CD4-positive, alpha-beta memory T cell (primary cell): ENCODE measurements at regions of chr2 and their contacts with region 1.

Region 1: GRCh38 chr2:102366406-102367112 is 11.0 kb downstream of the IL18R1 start:
- DNase-seq: peak; percentile 30 to 55 (median 47)
- H3K4me3 ChIP-seq: peak overlapping the region; percentile 33 to 41
- H3K4me3 Mint-ChIP-seq: peak overlapping the region; percentile 18 to 86 (median 80)
- H3K27ac ChIP-seq: peak overlapping the region; percentile 59
- H3K27ac Mint-ChIP-seq: peak overlapping the region; percentile 81 to 98 (median 93)
- H3K4me1 ChIP-seq: peaks cover 51% of the 10 kb centered on the region
- H3K4me1 Mint-ChIP-seq: peaks cover 37 to 82% (median 64%) of the 10 kb centered on the region in 4 donors
- H3K27me3 ChIP-seq: no peaks in the 10 kb centered on the region
- H3K27me3 Mint-ChIP-seq: no peaks in the 10 kb centered on the region

Region 2: GRCh38 chr2:102317715-102318114 is 48.8 kb before region 1 on chr2:
- CTCF ChIA-PET with region 1: no interaction called
- POLR2A ChIA-PET with region 1: no interaction called
- intact Hi-C with region 1: no loop called
- DNase-seq: no peak
- H3K4me3 ChIP-seq: no peak overlapping the region
- H3K4me3 Mint-ChIP-seq: no peak overlapping the region
- H3K27ac ChIP-seq: no peak overlapping the region
- H3K27ac Mint-ChIP-seq: no peak overlapping the region
- H3K4me1 ChIP-seq: no peaks in the 10 kb centered on the region
- H3K4me1 Mint-ChIP-seq: no peaks in the 10 kb centered on the region
- H3K27me3 ChIP-seq: no peaks in the 10 kb centered on the region
- H3K27me3 Mint-ChIP-seq: no peaks in the 10 kb centered on the region

Region 3: GRCh38 chr2:102391565-102391964 is 25.0 kb after region 1 on chr2:
- CTCF ChIA-PET with region 1: no interaction called
- POLR2A ChIA-PET with region 1: interaction called, 4 read pairs
- intact Hi-C with region 1: loop called (anchors 1 kb)
- DNase-seq: peak; percentile 63 to 77 (median 73)
- H3K4me3 ChIP-seq: no peak overlapping the region
- H3K4me3 Mint-ChIP-seq: peak overlapping the region in 5 of 8 donors; percentile 1 to 51 (median 23)
- H3K27ac ChIP-seq: no peak overlapping the region
- H3K27ac Mint-ChIP-seq: peak overlapping the region in 5 of 7 donors; percentile 5 to 60 (median 43)
- H3K4me1 ChIP-seq: peaks cover 16% of the 10 kb centered on the region
- H3K4me1 Mint-ChIP-seq: peaks cover 17 to 35% (median 30%) of the 10 kb centered on the region in 4 donors
- H3K27me3 ChIP-seq: no peaks in the 10 kb centered on the region
- H3K27me3 Mint-ChIP-seq: no peaks in the 10 kb centered on the region

Region 4: DNA sequence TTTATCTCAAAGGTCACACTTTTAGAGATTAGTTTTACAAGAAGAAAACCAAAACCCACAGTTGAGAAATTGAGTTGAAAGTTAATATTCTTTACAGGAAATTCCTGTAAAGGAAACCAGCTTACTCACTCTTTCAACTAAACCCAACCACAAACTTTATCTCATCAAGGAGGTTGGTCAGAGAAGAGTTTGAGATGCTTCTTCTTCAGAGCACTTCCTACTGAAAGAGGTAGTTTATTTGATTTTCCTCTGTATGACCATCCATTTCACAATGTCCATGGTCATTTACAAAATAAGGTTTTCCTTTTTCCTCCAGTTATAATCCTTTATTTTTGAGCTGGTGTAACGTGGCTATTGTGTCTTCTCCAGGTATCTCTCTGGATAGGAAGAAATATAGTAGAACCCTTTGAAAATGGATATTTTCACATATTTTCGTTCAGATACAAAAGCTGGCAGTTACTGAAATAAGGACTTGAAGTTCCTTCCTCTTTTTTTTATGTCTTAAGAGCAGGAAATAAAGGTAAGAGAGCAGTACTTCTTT is 51.9 kb after region 1 on chr2:
- CTCF ChIA-PET with region 1: no interaction called
- POLR2A ChIA-PET with region 1: interaction called, 6 read pairs
- intact Hi-C with region 1: loop called (anchors 2 kb)
- DNase-seq: peak; percentile 45 to 68 (median 60)
- H3K4me3 ChIP-seq: no peak overlapping the region
- H3K4me3 Mint-ChIP-seq: peak overlapping the region; percentile 75 to 88 (median 81)
- H3K27ac ChIP-seq: peak overlapping the region; percentile 25
- H3K27ac Mint-ChIP-seq: peak overlapping the region in 6 of 7 donors; percentile 56 to 91 (median 78)
- H3K4me1 ChIP-seq: peaks cover 70% of the 10 kb centered on the region
- H3K4me1 Mint-ChIP-seq: peaks cover 43 to 74% (median 57%) of the 10 kb centered on the region in 4 donors
- H3K27me3 ChIP-seq: no peaks in the 10 kb centered on the region
- H3K27me3 Mint-ChIP-seq: no peaks in the 10 kb centered on the region